ENCODE measurements at regions of chr20 and their contacts with region 1.

Region 1: GRCh38 chr20:5529331-5530148 is 212.8 kb upstream of the PROKR2 start:
- DNase-seq: no peak
- H3K4me3 ChIP-seq: no peak overlapping the region
- CTCF ChIP-seq: peak; percentile 96

Region 2: GRCh38 chr20:5430670-5431069 is 98.9 kb before region 1 on chr20:
- CTCF ChIA-PET with region 1: no interaction called
- POLR2A ChIA-PET with region 1: no interaction called
- DNase-seq: no peak
- H3K4me3 ChIP-seq: no peak overlapping the region
- CTCF ChIP-seq: no peak

Region 3: GRCh38 chr20:5550733-5551529 is 21.4 kb after region 1 on chr20:
- CTCF ChIA-PET with region 1: interaction called, 14 read pairs
- POLR2A ChIA-PET with region 1: no interaction called
- DNase-seq: no peak
- H3K4me3 ChIP-seq: no peak overlapping the region
- CTCF ChIP-seq: no peak

Region 4: GRCh38 chr20:5779071-5779900 is 249.7 kb after region 1 on chr20:
- CTCF ChIA-PET with region 1: interaction called, 229 read pairs
- POLR2A ChIA-PET with region 1: no interaction called
- DNase-seq: no peak
- H3K4me3 ChIP-seq: no peak overlapping the region
- CTCF ChIP-seq: no peak

Region 5: DNA sequence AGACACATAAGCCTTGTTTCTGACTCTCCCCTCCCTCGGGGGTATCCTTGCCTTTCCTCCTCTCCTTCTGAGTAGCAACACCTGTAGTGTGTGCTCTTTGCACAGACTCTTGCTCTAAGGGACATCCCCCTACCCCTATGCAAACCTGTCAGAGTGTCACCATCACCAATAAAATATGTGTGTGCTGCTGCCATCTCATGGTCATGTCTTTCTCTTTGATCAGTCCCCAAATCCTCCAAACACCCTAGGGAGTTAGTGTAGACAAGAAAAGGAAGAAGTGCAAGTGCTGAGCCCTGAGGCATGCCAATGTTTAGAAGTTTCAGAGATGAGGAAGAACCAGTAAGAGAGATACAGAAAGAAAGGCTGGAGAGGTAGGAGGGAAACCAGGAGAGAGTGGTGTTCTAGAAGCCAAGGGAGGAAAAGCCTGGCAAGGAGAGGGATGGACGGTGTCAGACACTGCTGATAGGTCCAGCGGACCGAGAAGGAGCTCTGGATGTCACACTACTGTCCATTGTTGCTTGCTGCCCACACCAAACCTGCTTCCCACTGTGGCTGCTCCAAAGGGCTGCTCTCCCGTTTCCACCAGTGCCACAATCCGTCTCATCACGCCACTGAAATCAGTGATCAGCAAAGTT is 404.4 kb after region 1 on chr20:
- CTCF ChIA-PET with region 1: interaction called, 24 read pairs
- POLR2A ChIA-PET with region 1: no interaction called
- DNase-seq: no peak
- H3K4me3 ChIP-seq: no peak overlapping the region
- CTCF ChIP-seq: no peak

Region 6: DNA sequence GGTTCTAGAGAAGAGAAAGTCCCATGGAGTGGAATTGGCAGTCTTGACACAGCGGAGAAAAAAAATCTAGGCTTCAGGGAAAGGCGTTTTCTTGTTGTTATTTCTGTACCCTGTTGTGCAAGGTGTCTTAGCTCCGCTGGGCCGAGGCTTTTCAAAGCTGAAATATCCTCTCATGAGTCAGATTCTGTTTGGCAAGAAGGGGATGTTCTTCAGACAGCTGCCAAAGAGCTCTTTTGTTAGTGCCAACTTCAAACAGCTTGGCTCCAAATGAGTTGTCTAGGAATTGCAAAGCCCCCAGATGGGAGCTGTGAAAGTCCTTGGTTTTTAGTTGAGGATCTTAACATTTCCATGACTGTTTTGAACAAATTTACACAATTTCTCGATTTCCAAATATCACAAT is 478.7 kb after region 1 on chr20:
- CTCF ChIA-PET with region 1: interaction called, 13 read pairs
- POLR2A ChIA-PET with region 1: no interaction called
- DNase-seq: peak; percentile 71
- H3K4me3 ChIP-seq: peak overlapping the region; percentile 29
- CTCF ChIP-seq: no peak

Measured in AG04449 (cell line).